Activated CD4-positive, alpha-beta T cell treated with anti-CD3 and anti-CD28 coated beads for 36 hours (primary cell): ENCODE measurements at regions of chr11 and their contacts with region 1.

Region 1: DNA sequence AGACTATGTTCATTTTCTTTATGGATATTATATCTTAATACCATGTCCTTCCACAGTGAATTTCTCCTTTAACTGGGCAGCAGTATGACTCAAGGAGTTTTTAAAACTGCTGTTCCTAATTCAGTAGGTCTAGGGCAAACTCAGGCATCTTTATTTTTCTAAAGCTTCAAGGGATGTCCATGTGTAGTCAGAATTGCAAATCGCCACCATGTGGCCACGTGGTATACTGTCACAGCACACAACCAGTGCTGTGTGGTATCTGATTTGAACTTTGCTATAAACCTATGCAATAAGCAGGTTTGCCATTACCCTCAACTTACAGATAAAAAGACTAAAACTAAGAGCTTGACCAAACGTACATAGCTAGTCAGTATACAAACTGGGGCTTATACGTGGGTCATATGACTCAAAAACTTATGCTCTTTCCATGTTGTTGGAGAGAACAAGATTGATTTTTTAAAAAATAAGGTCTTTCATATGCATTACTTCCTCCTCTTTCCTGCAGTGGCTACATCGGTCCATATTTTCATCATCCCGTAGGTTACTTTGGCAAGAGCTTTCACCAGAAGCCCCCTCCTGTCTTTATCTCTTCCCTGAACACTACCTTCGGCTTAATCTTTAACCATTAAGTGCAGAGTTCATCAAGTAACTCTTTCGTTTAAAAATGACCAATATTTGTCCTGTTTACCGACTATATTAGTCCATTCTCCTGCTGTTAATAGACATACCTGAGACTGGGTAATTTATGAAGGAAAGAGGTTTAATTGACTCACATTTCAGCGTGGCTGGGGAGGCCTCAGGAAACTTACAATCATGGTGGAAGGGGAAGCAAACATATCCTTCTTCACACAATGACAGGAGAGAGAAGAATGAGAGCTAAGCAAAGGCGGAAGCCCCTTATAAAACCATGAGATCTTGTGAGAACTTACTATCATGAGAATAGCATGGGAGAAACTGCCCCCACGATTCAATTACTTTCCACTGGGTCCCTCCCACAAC is 8.0 kb upstream of the HTATIP2 start:
- DNase-seq: peak; percentile 66
- ATAC-seq: peak; percentile 90
- H3K4me3 Mint-ChIP-seq: no peak overlapping the region
- H3K27ac Mint-ChIP-seq: no peak overlapping the region
- H3K4me1 Mint-ChIP-seq: peaks cover 8% of the 10 kb centered on the region
- H3K27me3 Mint-ChIP-seq: no peaks in the 10 kb centered on the region

Region 2: GRCh38 chr11:19951558-19952115 is 403.9 kb before region 1 on chr11:
- CTCF ChIA-PET with region 1: interaction called, 5 read pairs
- POLR2A ChIA-PET with region 1: no interaction called
- intact Hi-C with region 1: loop called (anchors 2 to 5 kb)
- DNase-seq: no peak
- ATAC-seq: peak; percentile 36
- H3K4me3 Mint-ChIP-seq: no peak overlapping the region
- H3K27ac Mint-ChIP-seq: no peak overlapping the region
- H3K4me1 Mint-ChIP-seq: peaks cover 8% of the 10 kb centered on the region
- H3K27me3 Mint-ChIP-seq: peaks cover 23% of the 10 kb centered on the region

Region 3: DNA sequence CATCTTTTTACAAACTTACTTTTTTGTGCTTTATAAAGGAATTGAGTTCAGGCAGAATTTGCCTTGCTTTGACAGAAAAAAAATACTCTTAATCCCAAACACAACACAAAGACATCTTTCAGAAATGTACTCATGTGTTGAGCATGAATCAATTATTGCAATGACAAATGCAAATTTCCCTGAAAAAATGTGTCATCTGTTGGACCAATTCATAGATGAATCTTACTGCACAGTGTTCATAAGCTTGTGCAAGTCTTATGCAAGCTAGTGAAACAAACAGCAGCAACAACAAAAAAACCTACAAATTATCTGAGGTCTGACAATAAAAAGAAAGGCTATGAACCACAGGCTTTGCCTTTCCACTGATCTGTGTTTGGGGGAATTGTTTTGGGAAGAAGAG is 34.3 kb before region 1 on chr11:
- CTCF ChIA-PET with region 1: interaction called, 19 read pairs
- POLR2A ChIA-PET with region 1: no interaction called
- intact Hi-C with region 1: no loop called
- DNase-seq: no peak
- ATAC-seq: no peak
- H3K4me3 Mint-ChIP-seq: no peak overlapping the region
- H3K27ac Mint-ChIP-seq: no peak overlapping the region
- H3K4me1 Mint-ChIP-seq: no peaks in the 10 kb centered on the region
- H3K27me3 Mint-ChIP-seq: peaks cover 3% of the 10 kb centered on the region

Region 4: DNA sequence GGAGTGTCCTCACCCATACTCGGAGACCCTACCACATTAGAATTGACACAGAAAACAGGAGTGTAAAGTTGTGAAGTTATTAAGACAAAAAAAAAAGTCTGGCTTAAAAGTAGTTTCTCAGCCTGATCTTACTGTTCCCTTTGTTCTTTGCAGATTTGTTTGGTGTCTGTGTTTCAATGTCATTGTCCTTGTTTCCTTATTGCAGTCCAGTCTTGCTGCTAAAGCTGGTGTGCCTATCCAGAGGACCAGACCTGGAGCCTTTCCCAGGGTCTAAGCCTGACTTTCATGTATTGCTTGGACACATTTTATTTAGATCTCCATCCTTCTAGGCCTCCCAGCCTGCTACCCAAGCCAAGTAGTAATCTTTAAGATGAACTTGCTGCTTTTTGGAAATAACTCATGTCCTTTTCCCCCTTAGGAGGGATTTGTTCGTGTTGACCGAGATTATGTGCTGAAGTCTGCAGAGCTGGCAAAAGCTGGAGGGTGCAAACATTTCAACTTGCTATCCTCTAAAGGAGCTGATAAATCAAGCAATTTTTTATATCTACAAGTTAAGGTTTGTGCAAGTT is 20.7 kb after region 1 on chr11:
- CTCF ChIA-PET with region 1: interaction called, 12 read pairs
- POLR2A ChIA-PET with region 1: no interaction called
- intact Hi-C with region 1: no loop called
- DNase-seq: no peak
- ATAC-seq: no peak
- H3K4me3 Mint-ChIP-seq: no peak overlapping the region
- H3K27ac Mint-ChIP-seq: peak overlapping the region; percentile 21
- H3K4me1 Mint-ChIP-seq: peaks cover 15% of the 10 kb centered on the region
- H3K27me3 Mint-ChIP-seq: no peaks in the 10 kb centered on the region